Activated B cell treated with CpG ODN at 0.5 μM for 24 hours (primary cell): ENCODE measurements at regions of chr1 and their contacts with region 1.

Region 1: DNA sequence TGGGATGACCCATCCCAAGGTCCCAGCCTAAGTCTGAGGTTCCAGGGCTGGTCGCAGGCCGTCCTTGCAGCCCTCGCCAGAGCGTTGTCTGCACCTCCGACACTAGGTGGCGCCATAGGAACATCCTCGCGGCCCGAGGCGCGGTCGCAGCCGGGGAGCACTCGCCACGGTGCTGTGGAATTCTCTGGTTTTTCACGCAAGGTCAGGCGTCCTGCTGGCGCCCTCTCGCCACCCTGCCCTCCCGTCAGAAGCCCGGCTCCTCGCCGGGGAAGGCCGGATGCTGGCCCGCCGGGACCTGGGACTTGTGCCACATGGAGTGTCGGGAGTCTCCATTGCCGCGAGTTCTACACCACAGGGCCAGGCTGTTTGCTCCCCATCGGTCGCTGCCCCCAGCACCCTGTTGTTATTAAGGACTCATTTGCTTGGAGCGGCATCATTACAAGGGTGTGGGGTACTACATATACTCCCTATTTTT is 196.8 kb upstream of the LMO4 start:
- DNase-seq: peak; percentile 66
- ATAC-seq: peak; percentile 97
- H3K4me3 Mint-ChIP-seq: peak overlapping the region; percentile 85
- H3K27ac Mint-ChIP-seq: no peak overlapping the region
- H3K4me1 Mint-ChIP-seq: peaks cover 10% of the 10 kb centered on the region
- H3K27me3 Mint-ChIP-seq: peaks cover 23% of the 10 kb centered on the region
- CTCF ChIP-seq: peak; percentile 74

Region 2: GRCh38 chr1:87151500-87152421 is 19.9 kb after region 1 on chr1:
- CTCF ChIA-PET with region 1: no interaction called
- POLR2A ChIA-PET with region 1: no interaction called
- intact Hi-C with region 1: loop called (anchors 2 kb)
- DNase-seq: peak; percentile 27
- ATAC-seq: peak; percentile 74
- H3K4me3 Mint-ChIP-seq: peak overlapping the region; percentile 86
- H3K27ac Mint-ChIP-seq: no peak overlapping the region
- H3K4me1 Mint-ChIP-seq: peaks cover 14% of the 10 kb centered on the region
- H3K27me3 Mint-ChIP-seq: peaks cover 34% of the 10 kb centered on the region
- CTCF ChIP-seq: no peak

Region 3: GRCh38 chr1:87292684-87293493 is 161.0 kb after region 1 on chr1:
- CTCF ChIA-PET with region 1: no interaction called
- POLR2A ChIA-PET with region 1: no interaction called
- intact Hi-C with region 1: loop called (anchors 5 kb)
- DNase-seq: no peak
- ATAC-seq: peak; percentile 52
- H3K4me3 Mint-ChIP-seq: no peak overlapping the region
- H3K27ac Mint-ChIP-seq: no peak overlapping the region
- H3K4me1 Mint-ChIP-seq: no peaks in the 10 kb centered on the region
- H3K27me3 Mint-ChIP-seq: peaks cover 2% of the 10 kb centered on the region
- CTCF ChIP-seq: peak; percentile 71

Region 4: DNA sequence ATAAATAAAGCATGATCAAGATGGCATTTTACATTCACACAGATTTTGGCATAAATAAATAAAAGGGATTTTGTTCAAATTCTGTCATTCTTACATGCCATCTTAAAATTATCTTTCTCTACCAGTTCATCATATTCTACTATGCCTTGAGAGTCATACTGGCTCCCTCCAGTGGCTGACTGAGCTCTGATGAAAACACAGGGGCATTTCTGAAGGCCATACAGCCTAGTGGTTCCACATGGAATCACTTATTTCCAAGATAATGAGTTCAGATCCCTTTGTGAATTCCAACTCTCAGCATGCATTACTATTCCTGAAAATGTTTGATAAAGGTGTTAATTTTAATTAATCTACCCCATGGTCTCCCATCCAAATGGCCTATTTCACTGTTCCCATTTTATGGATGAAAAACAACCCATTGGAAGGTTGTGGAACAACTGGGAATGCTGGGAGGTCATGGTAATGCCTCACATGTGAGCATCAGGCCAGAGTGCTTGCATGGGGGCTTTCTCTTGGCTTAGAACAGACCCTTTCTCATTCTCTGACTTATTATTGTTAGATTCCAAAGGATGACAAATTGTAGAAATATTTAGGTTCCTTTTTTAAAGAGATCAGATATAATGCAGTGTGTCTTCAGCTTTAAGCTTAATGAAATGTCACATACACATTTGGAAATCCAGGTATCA is 929.8 kb after region 1 on chr1:
- CTCF ChIA-PET with region 1: no interaction called
- POLR2A ChIA-PET with region 1: no interaction called
- intact Hi-C with region 1: loop called (anchors 1 kb)
- DNase-seq: no peak
- ATAC-seq: peak; percentile 60
- H3K4me3 Mint-ChIP-seq: no peak overlapping the region
- H3K27ac Mint-ChIP-seq: no peak overlapping the region
- H3K4me1 Mint-ChIP-seq: no peaks in the 10 kb centered on the region
- H3K27me3 Mint-ChIP-seq: no peaks in the 10 kb centered on the region
- CTCF ChIP-seq: no peak

Region 5: DNA sequence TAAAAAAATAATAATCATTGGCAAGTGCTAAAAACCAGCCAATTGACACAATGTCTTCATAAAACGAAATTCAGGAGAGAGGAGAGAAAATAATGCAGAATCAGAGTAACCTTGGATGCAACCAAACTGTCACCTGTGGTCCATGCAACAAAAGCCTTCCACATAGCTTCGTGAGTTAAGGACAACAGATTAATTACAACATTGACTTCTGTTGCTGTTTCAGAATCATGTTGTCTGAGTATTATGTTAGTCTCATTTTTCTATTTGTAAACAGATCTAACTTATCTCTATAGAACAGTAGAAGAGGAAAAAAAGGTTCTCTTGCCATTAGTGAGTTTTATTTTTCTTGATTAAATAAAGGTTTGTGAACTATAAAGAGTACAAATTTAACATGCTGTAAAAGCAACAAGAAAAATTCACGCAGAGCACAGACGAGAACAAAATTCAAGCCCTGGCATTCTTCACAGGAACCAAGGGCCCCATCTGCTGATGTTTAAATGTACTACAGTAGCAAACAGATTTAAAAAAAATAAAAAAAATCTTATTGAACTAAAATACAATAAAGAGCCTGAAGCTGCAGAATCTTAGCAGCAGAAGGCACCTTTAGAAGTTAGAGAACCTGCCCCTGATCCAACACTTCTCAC is 1171.1 kb after region 1 on chr1:
- CTCF ChIA-PET with region 1: no interaction called
- POLR2A ChIA-PET with region 1: no interaction called
- intact Hi-C with region 1: loop called (anchors 5 kb)
- DNase-seq: no peak
- ATAC-seq: no peak
- H3K4me3 Mint-ChIP-seq: no peak overlapping the region
- H3K27ac Mint-ChIP-seq: no peak overlapping the region
- H3K4me1 Mint-ChIP-seq: no peaks in the 10 kb centered on the region
- H3K27me3 Mint-ChIP-seq: peaks cover 6% of the 10 kb centered on the region
- CTCF ChIP-seq: no peak

Region 6: DNA sequence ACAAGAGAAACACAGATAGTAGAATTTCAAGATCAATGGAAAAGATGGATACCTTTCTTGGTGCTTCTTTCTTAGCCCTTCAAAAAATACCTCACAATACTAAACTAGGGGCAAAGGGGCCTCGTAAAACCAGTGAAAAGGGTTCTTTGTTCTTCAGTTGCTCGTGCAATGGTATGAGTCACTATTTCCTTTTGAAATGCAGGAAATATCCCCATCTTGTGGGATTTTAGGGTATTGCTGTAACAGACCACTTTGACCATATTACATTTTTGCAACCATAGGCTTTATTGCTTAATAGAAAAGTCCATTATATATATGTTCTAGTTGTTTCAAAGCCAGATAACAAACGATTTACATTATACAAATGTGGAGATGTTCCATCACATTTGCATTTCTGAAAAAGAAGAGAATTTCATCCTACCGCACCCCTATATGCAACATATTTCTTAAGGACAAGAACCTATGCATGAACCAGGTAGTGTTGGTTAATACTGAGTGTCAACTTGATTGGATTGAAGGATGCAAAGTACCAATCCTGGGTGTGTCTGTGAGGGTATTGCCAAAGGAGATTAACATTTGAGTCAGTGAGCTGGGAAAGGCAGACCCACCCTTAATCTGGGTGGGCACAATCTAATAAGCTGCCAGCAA is 1463.6 kb after region 1 on chr1:
- CTCF ChIA-PET with region 1: no interaction called
- POLR2A ChIA-PET with region 1: no interaction called
- intact Hi-C with region 1: loop called (anchors 1 kb)
- DNase-seq: no peak
- ATAC-seq: no peak
- H3K4me3 Mint-ChIP-seq: no peak overlapping the region
- H3K27ac Mint-ChIP-seq: no peak overlapping the region
- H3K4me1 Mint-ChIP-seq: no peaks in the 10 kb centered on the region
- H3K27me3 Mint-ChIP-seq: peaks cover 8% of the 10 kb centered on the region
- CTCF ChIP-seq: no peak

Region 7: GRCh38 chr1:88877382-88877825 is 1745.6 kb after region 1 on chr1:
- CTCF ChIA-PET with region 1: no interaction called
- POLR2A ChIA-PET with region 1: no interaction called
- intact Hi-C with region 1: loop called (anchors 5 kb)
- DNase-seq: no peak
- ATAC-seq: no peak
- H3K4me3 Mint-ChIP-seq: no peak overlapping the region
- H3K27ac Mint-ChIP-seq: peak overlapping the region; percentile 14
- H3K4me1 Mint-ChIP-seq: peaks cover 24% of the 10 kb centered on the region
- H3K27me3 Mint-ChIP-seq: no peaks in the 10 kb centered on the region
- CTCF ChIP-seq: peak; percentile 51